Posterior vena cava (tissue), 2 donors: ENCODE measurements at regions of chr3 and their contacts with region 1.

Region 1: DNA sequence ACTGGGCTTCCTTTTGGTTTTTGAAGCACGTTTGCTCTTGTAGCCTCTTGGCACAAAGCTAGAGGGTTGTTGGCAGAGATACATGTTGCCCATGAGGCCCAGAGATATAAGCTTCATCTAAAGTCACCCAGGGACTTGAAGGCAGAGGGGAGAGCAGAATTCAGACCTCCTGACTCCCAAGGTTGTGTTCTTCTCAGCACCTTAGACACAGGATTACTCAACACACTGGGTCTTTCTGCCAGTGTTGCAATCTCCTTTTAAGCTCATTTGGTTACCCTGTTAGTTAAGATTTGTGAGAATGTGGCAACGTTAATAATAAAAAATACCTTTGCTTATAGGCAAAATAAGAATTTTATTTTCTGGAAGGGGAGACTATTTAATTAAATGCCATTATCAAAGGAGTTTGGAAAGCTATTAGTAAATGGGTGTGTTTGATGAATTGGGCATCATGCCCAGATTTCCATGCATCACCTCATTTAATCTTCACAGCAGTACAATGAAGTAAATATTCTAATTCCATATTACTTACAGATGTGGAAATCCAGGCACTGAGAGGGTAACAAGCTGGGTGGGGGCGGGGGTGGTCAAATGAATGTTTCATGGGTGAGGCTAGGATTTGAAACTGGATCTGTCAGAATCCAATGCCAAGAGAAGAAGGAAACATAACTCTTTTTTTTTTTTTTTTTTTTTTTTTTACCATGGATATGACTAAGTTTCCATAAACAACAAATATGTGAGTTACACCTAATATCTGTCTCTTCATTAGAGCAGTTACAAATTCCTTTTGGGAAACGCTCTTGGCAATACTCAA is 183.3 kb downstream of the NR1D2 start:
- DNase-seq: no peak

Region 2: DNA sequence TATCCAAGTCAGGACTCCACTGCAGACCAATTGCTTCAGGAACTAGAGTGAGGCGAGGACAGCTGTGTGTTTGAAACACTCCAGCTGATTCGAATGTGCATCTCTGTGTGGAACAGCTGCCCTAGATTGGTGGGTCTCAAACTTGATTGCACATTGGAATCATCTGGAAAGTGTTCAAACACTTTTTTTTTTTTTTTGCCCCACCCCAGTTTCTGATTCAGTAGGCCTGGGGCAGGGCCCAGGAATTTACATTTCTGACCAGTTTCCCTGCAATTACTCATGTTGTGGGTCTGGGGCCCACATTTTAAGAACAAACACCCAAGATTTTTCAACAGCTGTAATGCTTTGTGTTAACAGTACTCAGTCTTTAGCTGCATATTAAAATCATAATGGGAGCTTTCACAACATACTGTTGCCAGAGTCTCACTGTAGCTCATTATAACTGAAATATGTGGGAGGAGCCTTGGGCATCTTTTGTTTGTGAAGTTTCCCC is 26.7 kb before region 1 on chr3:
- intact Hi-C with region 1: no loop called
- DNase-seq: no peak

Region 3: DNA sequence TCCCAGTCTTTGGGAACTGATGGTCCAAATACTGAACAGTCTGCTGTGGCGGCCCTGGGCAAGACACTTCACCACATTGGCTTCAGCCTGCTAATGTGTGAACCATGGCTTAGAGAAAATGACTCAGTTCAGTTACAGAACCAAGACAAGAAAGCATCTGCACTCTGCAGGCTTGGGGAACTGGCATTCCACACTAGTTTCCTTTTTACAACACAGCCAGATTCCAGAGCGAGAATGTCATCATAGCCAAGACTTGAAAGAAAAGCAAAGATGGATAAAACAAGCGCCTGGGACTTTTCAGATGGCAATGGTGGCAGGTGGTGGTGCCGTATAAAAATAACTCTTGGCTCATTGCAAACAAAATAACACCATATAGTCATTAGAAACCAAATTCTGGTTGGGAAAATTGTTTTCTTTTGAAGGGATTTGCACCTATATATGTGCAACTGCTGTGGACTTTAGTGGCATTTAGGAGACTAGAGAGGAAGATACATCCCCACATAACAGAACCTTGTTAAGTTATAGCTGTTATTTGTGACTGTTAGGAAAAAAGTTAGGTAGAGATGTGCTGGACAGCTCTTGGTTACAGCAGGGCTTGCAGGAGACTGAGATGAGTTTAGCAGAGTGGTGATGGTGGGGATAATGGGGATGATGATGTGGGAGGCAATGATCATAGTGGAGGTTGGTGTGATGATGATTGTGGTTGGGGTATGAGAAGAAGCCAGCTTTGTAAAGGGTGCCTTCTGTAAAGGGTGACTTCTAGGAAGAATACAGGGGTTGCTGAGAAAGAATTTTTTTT is 92.7 kb after region 1 on chr3:
- intact Hi-C with region 1: loop called in 1 of 2 experiments (anchors 10 kb)
- DNase-seq: no peak